ENCODE measurements at regions of chrX and their contacts with region 1.

Region 1: DNA sequence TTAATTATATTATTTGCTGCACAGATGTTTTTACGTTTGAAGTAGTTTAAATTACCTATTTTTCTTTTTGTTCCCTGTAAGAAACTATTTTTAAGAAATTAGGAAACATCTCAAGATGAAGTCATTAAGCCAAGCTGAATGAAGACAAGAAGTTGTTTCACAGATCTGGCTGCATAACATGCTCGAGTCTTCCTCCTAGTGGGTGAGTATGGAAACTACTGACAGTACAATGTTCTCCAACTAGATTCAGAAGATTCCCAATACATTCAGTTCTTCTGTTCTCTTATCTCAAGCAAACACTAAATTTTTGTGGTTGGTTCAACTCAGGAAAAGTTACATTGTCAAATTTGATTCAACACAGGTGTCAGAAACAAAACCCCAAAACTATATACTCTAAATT is 256.8 kb upstream of the VCX start:
- H3K4me3 Mint-ChIP-seq: no peak overlapping the region
- H3K27ac Mint-ChIP-seq: no peak overlapping the region
- H3K4me1 Mint-ChIP-seq: no peaks in the 10 kb centered on the region
- H3K27me3 Mint-ChIP-seq: no peaks in the 10 kb centered on the region

Region 2: DNA sequence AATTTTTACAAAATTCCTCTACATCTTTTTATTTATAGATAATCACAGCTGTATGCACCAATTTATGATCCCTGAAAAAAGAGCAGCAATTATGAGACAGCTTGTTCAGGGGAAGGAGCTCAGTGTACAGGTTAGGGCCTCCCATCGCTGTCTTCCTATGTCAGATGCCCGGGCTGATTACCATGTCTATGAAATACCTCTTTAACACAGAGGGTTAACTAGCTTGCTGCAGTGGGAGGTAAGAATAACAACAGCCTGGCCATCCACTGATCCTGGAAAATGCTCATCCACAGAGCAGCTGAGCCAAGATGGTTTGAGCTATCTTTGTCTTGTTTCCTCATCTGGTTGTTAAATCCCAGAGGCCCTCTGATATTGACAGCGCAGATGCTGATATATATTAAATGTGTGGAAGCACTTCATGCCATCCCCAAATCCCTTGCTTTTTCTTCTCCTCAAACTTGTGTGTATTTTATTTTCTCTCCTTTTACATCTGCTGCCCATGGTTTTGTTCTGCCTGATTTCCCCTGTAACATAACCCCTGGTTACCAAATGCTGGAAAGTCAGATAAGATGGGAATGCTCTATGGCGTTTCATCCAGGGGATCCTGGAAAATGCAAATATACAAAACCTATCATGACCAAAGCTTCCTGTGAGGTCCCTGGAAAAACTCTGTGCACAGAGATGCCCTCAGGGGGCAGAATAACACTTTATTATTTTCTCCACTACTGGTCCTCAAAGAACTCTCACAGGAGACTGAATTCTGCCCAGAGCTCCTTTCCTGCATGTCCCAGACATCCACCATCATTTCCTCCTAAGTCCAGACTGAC is 352.3 kb before region 1 on chrX:
- intact Hi-C with region 1: loop called (anchors 10 kb)
- H3K4me3 Mint-ChIP-seq: no peak overlapping the region
- H3K27ac Mint-ChIP-seq: no peak overlapping the region
- H3K4me1 Mint-ChIP-seq: peaks cover 13% of the 10 kb centered on the region
- H3K27me3 Mint-ChIP-seq: no peaks in the 10 kb centered on the region

Measured in dendritic cell treated with granulocyte-macrophage colony-stimulating factor and Interleukin-4, amounts not matched to agents 40 ng/mL and 50 ng/mL, for 4 days (primary cell).